MCF 10A (cell line): ENCODE measurements at regions of chr9 and their contacts with region 1.

Region 1: GRCh38 chr9:14322211-14323082 is 8.5 kb upstream of the NFIB start:
- DNase-seq: peak; percentile 94
- H3K4me3 Mint-ChIP-seq: peak overlapping the region; percentile 86
- H3K27ac Mint-ChIP-seq: peak overlapping the region; percentile 81
- H3K4me1 Mint-ChIP-seq: peaks cover 56% of the 10 kb centered on the region
- H3K27me3 Mint-ChIP-seq: no peaks in the 10 kb centered on the region
- CTCF ChIP-seq: peak; percentile 38

Region 2: GRCh38 chr9:13863112-13863511 is 459.3 kb before region 1 on chr9:
- CTCF ChIA-PET with region 1: no interaction called
- POLR2A ChIA-PET with region 1: no interaction called
- intact Hi-C with region 1: loop called (anchors 10 kb)
- DNase-seq: no peak
- H3K4me3 Mint-ChIP-seq: no peak overlapping the region
- H3K27ac Mint-ChIP-seq: no peak overlapping the region
- H3K4me1 Mint-ChIP-seq: peaks cover 10% of the 10 kb centered on the region
- H3K27me3 Mint-ChIP-seq: no peaks in the 10 kb centered on the region
- CTCF ChIP-seq: no peak

Region 3: GRCh38 chr9:14119694-14120514 is 202.5 kb before region 1 on chr9:
- CTCF ChIA-PET with region 1: no interaction called
- POLR2A ChIA-PET with region 1: interaction called, 3 read pairs
- intact Hi-C with region 1: loop called (anchors 5 kb)
- DNase-seq: peak; percentile 72
- H3K4me3 Mint-ChIP-seq: no peak overlapping the region
- H3K27ac Mint-ChIP-seq: peak overlapping the region; percentile 16
- H3K4me1 Mint-ChIP-seq: peaks cover 13% of the 10 kb centered on the region
- H3K27me3 Mint-ChIP-seq: no peaks in the 10 kb centered on the region
- CTCF ChIP-seq: no peak

Region 4: DNA sequence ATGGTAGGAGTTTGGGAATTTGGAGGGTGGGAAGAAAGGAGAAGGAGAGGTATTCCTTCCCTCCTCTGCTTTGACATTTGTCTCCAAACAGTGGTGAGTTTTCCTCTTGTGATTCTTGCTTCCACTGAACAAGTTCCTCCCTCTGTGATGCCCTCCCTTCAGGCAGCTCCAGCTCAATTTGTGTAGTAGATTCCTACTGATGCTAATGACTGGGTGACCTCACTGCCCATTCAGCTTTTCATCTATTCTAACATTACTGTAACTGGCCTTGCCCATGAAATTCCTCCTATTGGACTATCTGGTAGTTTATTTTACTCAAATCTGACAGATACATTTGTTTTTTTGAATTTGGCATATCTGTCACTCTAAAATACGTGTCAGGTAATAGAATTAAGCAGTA is 129.9 kb before region 1 on chr9:
- CTCF ChIA-PET with region 1: no interaction called
- POLR2A ChIA-PET with region 1: no interaction called
- intact Hi-C with region 1: no loop called
- DNase-seq: no peak
- H3K4me3 Mint-ChIP-seq: no peak overlapping the region
- H3K27ac Mint-ChIP-seq: no peak overlapping the region
- H3K4me1 Mint-ChIP-seq: peaks cover 19% of the 10 kb centered on the region
- H3K27me3 Mint-ChIP-seq: no peaks in the 10 kb centered on the region
- CTCF ChIP-seq: no peak

Region 5: GRCh38 chr9:14309403-14309802 is 13.0 kb before region 1 on chr9:
- CTCF ChIA-PET with region 1: interaction called, 11 read pairs
- POLR2A ChIA-PET with region 1: interaction called, 77 read pairs
- intact Hi-C with region 1: no loop called
- DNase-seq: no peak
- H3K4me3 Mint-ChIP-seq: peak overlapping the region; percentile 80
- H3K27ac Mint-ChIP-seq: peak overlapping the region; percentile 88
- H3K4me1 Mint-ChIP-seq: peaks cover 38% of the 10 kb centered on the region
- H3K27me3 Mint-ChIP-seq: no peaks in the 10 kb centered on the region
- CTCF ChIP-seq: no peak